ENCODE measurements at regions of chr15 and their contacts with region 1.

Region 1: DNA sequence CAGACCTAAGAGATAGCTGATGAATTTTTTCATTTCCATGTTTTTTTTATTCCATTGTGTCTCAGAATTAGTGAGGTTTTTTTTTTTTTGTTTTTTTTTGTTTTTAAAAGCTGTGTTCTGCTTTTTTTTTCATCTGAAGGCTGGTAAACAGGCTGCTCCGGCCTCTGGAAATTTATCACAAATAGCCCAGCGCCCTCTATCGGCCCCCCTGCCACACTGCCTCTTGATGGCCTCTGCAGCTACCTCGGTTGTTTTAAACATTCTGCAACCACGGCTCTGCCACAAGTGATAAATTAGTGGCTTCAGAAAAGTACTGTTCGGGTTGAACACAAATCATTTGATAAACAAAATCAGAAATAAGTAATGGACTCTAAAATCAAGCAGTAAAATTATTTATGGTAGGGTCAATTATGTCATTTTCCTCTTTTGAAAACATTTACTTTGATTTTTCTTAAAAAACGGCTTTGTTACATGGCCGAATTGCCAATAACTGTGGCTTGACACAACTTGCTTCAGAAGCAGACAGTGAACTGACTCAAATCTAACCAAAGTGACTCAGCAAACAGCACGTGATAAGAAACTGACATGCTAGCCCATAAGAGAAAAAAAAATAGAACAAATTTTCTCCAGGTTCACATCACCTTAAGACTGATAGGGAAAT is 87.8 kb downstream of the RSL24D1 start:
- DNase-seq: peak; percentile 35 to 73 (median 61)
- ATAC-seq: peak in 1 of 4 donors; percentile 45
- H3K4me3 ChIP-seq: no peak overlapping the region
- H3K27ac ChIP-seq: no peak overlapping the region
- H3K4me1 ChIP-seq: no peaks in the 10 kb centered on the region
- H3K27me3 ChIP-seq: peaks cover 0 to 6% (median 0%) of the 10 kb centered on the region in 9 donors
- CTCF ChIP-seq: peak; percentile 43 to 71 (median 60)
- POLR2A ChIP-seq: no peak

Region 2: DNA sequence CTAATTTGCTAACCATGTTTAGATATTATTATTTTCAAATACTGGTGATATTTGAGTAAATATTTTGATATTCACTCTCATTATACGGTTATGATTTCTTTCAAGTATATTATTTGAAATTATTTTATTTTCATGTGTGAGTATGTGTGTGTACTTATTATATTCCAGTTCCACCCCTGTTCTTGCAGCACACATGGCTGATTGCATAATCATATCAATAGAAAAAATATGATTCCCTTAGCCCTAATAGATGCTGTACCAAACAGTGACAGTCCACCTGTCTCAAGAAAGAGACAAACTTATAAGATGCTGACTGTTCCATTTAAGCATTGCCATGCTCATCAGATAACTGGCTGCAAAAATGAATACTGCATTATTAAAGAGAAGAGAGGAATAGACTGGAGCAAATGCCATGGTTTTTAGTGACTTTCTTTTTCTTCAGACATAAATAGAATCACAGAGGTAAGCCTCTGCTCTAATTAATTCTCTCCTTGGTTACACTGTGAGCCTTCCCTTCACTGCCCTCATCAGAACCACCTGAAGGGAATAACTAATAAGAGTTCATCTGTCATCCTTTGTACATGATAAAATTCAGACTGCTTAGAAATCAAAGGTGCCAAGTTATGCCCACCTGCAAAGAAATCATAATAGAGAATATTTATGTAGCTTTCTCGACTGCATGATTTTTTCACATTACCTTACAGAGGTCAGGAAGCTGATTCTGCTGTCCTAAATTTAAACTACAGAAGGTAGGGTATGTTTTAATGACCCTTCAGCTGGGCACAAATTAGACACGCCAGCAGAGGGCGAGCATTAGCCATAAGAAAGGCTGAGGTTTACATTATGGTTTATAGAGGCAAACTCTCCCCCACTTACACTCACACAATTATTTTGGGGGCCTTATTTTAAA is 1146.4 kb before region 1 on chr15:
- intact Hi-C with region 1: loop called in 3 of 10 experiments (anchors 5 to 10 kb)
- DNase-seq: no peak
- ATAC-seq: no peak
- H3K4me3 ChIP-seq: no peak overlapping the region
- H3K27ac ChIP-seq: no peak overlapping the region
- H3K4me1 ChIP-seq: no peaks in the 10 kb centered on the region
- H3K27me3 ChIP-seq: no peaks in the 10 kb centered on the region
- CTCF ChIP-seq: peak in 10 of 12 donors; percentile 22 to 55 (median 41)
- POLR2A ChIP-seq: no peak

Region 3: GRCh38 chr15:54089791-54090190 is 1019.2 kb before region 1 on chr15:
- intact Hi-C with region 1: loop called in 1 of 10 experiments (anchors 5 kb)
- DNase-seq: no peak
- ATAC-seq: no peak
- H3K4me3 ChIP-seq: no peak overlapping the region
- H3K27ac ChIP-seq: no peak overlapping the region
- H3K4me1 ChIP-seq: no peaks in the 10 kb centered on the region
- H3K27me3 ChIP-seq: peaks cover 0 to 5% (median 0%) of the 10 kb centered on the region in 9 donors
- CTCF ChIP-seq: no peak
- POLR2A ChIP-seq: no peak